Transverse colon (tissue), 4 donors: ENCODE measurements at regions of chr12 and their contacts with region 1.

Region 1: DNA sequence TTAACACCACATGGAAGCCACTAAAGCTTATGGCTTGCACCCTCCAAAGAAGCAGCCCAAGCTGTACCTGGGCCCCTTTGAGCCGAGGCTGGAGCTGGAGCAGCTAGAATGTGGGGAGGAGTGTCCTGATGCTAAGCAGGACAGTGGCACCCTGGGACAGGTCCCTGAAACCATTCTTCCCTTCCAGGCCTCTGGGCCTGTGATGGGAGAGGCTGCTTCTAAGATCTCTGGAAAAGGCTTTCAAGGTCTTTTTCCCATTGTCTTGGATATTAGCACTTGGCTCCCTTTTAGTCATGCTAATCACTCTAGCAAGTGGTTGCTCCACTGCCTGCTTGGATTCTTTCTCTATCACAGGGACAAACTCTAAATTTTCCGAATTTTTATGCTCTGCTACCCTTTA is 40.9 kb downstream of the OSBPL8 start:
- DNase-seq: no peak
- H3K4me3 ChIP-seq: no peak overlapping the region
- H3K27ac ChIP-seq: no peak overlapping the region
- H3K4me1 ChIP-seq: peaks cover 0 to 3% (median 0%) of the 10 kb centered on the region in 4 donors
- H3K27me3 ChIP-seq: peaks cover 3% of the 10 kb centered on the region
- CTCF ChIP-seq: no peak
- EP300 ChIP-seq: no peak
- POLR2A ChIP-seq: no peak

Region 2: GRCh38 chr12:76445469-76445868 is 73.2 kb before region 1 on chr12:
- in situ Hi-C with region 1: no loop called
- intact Hi-C with region 1: no loop called
- DNase-seq: no peak
- H3K4me3 ChIP-seq: no peak overlapping the region
- H3K27ac ChIP-seq: no peak overlapping the region
- H3K4me1 ChIP-seq: peaks cover 0 to 5% (median 0%) of the 10 kb centered on the region in 4 donors
- H3K27me3 ChIP-seq: no peaks in the 10 kb centered on the region
- CTCF ChIP-seq: no peak
- EP300 ChIP-seq: no peak
- POLR2A ChIP-seq: no peak

Region 3: DNA sequence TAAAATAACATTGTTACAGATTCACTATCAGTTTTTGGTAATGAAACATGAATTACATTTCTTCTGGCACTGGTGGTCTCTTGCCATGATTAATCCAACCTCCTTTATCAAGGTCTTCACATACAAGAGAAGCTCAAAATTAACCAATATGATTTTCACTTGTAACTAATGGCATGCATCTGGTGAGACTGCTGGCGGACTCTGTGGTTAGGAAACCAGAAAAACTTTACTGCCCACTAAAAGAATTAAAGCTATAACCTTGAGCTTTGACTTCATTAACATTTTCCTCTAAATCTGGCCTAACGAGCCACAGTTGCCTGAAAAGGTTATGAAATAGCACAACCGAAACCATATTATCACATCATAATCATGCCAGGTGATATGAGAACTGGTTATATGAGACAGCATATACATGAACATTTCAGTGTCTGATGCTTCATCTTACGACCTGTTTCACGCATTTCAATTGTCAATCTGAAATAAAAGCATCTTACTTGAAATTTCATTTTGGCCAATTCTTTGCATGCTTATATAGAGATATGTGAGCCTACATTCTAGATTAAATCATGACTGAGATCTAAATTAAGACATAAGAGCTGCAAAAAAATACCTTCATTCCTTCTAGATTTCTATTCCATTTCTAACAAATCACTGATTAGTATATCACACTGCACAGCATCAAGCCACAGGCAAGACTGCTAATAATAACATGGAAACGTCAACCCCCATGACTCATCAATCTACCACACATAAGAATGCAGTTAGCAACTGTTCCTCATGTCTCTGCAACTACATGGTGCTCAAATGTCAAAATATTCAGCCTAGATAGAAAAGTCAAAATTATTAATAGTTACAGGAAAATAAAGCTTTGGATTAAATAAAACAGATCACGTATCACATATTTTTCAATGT is 48.4 kb before region 1 on chr12:
- in situ Hi-C with region 1: no loop called
- intact Hi-C with region 1: loop called (anchors 1 kb)
- DNase-seq: no peak
- H3K4me3 ChIP-seq: no peak overlapping the region
- H3K27ac ChIP-seq: no peak overlapping the region
- H3K4me1 ChIP-seq: peaks cover 0 to 5% (median 2%) of the 10 kb centered on the region in 4 donors
- H3K27me3 ChIP-seq: no peaks in the 10 kb centered on the region
- CTCF ChIP-seq: no peak
- EP300 ChIP-seq: no peak
- POLR2A ChIP-seq: no peak